Right ventricle myocardium inferior (tissue), 1 donor: ENCODE measurements at regions of chr3 and their contacts with region 1.

Region 1: DNA sequence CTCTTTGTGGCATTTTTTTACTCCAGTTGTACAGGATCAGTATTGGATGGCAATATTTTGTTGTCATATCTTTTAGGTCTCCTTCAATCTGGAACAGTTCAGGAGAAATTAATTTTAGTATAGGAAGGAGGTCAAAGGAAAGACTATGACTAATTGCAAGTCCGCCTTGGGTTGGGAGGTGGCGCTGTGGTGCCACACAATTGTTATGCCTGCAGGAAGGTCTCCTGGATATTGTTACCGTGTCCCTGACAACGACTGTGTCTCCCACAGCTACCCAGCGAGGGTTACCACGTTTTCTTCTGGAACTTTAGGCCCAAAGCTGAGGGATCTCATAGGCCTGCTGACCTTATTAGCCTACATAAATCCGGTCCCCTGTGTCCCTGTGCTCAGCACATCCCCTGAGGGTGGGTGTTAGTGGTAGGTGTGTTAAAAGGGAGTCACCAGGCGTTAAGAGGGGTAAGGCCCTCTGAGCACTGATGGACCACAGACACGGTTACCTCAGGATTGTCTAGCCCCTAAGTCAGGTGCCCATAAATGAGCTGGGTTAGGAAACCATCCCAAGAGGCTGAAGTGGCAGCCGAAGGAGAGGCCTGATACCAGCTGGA is 31.5 kb downstream of the KCNAB1 start:
- DNase-seq: peak; percentile 79
- ATAC-seq: peak; percentile 73

Region 2: GRCh38 chr3:156050918-156051317 is 101.0 kb before region 1 on chr3:
- intact Hi-C with region 1: loop called (anchors 5 kb)
- DNase-seq: no peak
- ATAC-seq: no peak

Region 3: GRCh38 chr3:156233876-156234275 is 82.0 kb after region 1 on chr3:
- intact Hi-C with region 1: no loop called
- DNase-seq: no peak
- ATAC-seq: no peak

Region 4: GRCh38 chr3:156449712-156450574 is 298.0 kb after region 1 on chr3:
- intact Hi-C with region 1: loop called (anchors 5 kb)
- DNase-seq: no peak
- ATAC-seq: peak; percentile 52

Region 5: DNA sequence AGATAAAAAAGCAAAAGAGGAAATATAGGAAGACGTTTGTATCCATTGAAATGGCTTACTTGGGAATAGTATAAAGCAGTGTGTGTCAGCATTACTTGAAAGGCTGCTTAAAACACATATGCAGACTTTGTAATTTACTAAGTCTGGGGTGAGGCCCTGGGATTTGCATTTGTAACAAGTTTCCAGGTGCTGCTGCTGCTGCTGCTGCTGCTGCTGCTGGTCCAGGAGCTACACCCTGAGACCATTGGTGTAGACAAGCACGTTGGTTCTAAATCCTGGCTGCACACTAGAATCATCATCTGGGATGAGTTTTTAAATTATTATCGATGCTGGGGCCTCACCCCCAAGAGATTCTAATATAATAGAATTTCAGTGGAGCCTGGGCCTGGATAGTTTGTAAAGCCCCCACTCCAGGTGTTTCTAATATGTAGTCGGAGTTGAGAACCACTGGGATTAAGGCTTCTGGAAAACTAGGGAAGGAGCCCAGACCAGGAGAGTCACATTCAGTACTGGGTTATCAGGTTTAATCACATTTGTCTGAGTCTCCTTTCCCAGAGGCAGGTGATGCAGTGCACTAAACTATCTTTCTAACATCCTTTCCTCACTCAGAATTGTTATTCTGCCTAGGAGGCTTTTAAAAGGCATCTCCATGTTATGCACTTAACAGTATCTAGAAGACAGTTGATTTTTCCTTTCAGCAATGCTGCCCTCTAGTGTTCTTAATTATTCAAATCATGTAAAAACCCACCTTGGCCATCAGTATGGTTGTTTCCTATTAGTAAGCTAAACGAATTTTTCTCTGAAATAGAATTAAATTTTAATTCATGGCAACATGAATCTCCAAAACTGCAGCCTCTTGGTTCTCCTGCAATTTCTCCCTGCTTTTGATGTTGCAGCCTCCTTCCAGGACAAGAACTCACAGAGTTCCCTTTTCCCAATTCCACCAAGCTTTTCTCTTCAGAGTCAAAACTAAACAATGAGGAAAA is 357.6 kb after region 1 on chr3:
- intact Hi-C with region 1: loop called (anchors 1 kb)
- DNase-seq: no peak
- ATAC-seq: peak; percentile 65

Region 6: GRCh38 chr3:157081681-157082210 is 929.8 kb after region 1 on chr3:
- intact Hi-C with region 1: loop called (anchors 2 kb)
- DNase-seq: peak; percentile 95
- ATAC-seq: peak; percentile 84

Region 7: GRCh38 chr3:157136647-157137387 is 984.9 kb after region 1 on chr3:
- intact Hi-C with region 1: loop called (anchors 5 kb)
- DNase-seq: no peak
- ATAC-seq: peak; percentile 40